ENCODE measurements at regions of chr17 and their contacts with region 1.

Region 1: GRCh38 chr17:78745407-78746088 is 36.5 kb downstream of the CYTH1 start:
- DNase-seq: peak in 9 of 14 experiments; percentile 37 to 83 (median 48)
- ATAC-seq: no peak
- H3K4me3 ChIP-seq: no peak overlapping the region
- H3K4me3 Mint-ChIP-seq: peak overlapping the region; percentile 78
- H3K27ac ChIP-seq: peak overlapping the region; percentile 81 to 84
- H3K27ac Mint-ChIP-seq: peak overlapping the region; percentile 85
- H3K4me1 ChIP-seq: peaks cover 89% of the 10 kb centered on the region
- H3K4me1 Mint-ChIP-seq: peaks cover 94% of the 10 kb centered on the region
- H3K27me3 ChIP-seq: no peaks in the 10 kb centered on the region
- H3K27me3 Mint-ChIP-seq: no peaks in the 10 kb centered on the region
- CTCF ChIP-seq: peak; percentile 86

Region 2: GRCh38 chr17:78598013-78598471 is 147.5 kb before region 1 on chr17:
- CTCF ChIA-PET with region 1: no interaction called
- POLR2A ChIA-PET with region 1: no interaction called
- intact Hi-C with region 1: no loop called
- DNase-seq: no peak
- ATAC-seq: no peak
- H3K4me3 ChIP-seq: no peak overlapping the region
- H3K4me3 Mint-ChIP-seq: no peak overlapping the region
- H3K27ac ChIP-seq: no peak overlapping the region
- H3K27ac Mint-ChIP-seq: no peak overlapping the region
- H3K4me1 ChIP-seq: no peaks in the 10 kb centered on the region
- H3K4me1 Mint-ChIP-seq: no peaks in the 10 kb centered on the region
- H3K27me3 ChIP-seq: no peaks in the 10 kb centered on the region
- H3K27me3 Mint-ChIP-seq: peaks cover 19% of the 10 kb centered on the region
- CTCF ChIP-seq: no peak

Region 3: DNA sequence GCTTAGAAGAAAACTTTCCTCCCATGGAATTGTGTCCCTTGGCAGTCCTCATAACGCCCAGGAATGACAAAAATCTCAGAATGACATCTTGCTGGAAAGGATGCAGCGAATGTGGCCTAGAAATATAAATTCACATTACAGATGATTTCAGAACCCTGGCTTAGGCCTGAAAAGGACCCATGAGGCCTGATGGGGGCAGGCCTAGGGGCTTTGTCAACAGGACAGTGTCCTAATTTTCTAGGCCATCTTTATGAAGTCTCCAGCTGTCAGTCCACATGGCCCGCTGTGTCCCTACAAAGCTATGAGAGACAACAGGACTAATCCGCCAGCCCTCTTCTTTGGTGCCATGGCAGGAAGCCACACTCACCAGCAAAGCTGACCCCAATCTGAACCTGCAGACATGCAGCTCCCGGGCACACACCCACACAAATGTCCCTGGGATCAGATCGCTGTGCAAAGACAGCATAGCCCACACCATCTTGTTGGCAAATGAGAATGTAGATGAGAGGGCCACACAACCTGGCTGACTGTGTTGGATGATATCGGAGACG is 128.0 kb before region 1 on chr17:
- CTCF ChIA-PET with region 1: no interaction called
- POLR2A ChIA-PET with region 1: no interaction called
- intact Hi-C with region 1: no loop called
- DNase-seq: no peak
- ATAC-seq: no peak
- H3K4me3 ChIP-seq: no peak overlapping the region
- H3K4me3 Mint-ChIP-seq: no peak overlapping the region
- H3K27ac ChIP-seq: no peak overlapping the region
- H3K27ac Mint-ChIP-seq: no peak overlapping the region
- H3K4me1 ChIP-seq: no peaks in the 10 kb centered on the region
- H3K4me1 Mint-ChIP-seq: no peaks in the 10 kb centered on the region
- H3K27me3 ChIP-seq: no peaks in the 10 kb centered on the region
- H3K27me3 Mint-ChIP-seq: no peaks in the 10 kb centered on the region
- CTCF ChIP-seq: no peak

Region 4: GRCh38 chr17:78759203-78759968 is 13.8 kb after region 1 on chr17:
- CTCF ChIA-PET with region 1: interaction called, 3 read pairs
- POLR2A ChIA-PET with region 1: interaction called, 92 read pairs
- intact Hi-C with region 1: loop called in 1 of 2 experiments (anchors 1 kb)
- DNase-seq: peak; percentile 72 to 94 (median 82)
- ATAC-seq: peak; percentile 80
- H3K4me3 ChIP-seq: peak overlapping the region; percentile 32
- H3K4me3 Mint-ChIP-seq: peak overlapping the region; percentile 73
- H3K27ac ChIP-seq: peak overlapping the region; percentile 94 to 95
- H3K27ac Mint-ChIP-seq: peak overlapping the region; percentile 87
- H3K4me1 ChIP-seq: peaks cover 92% of the 10 kb centered on the region
- H3K4me1 Mint-ChIP-seq: peaks cover 85% of the 10 kb centered on the region
- H3K27me3 ChIP-seq: no peaks in the 10 kb centered on the region
- H3K27me3 Mint-ChIP-seq: no peaks in the 10 kb centered on the region
- CTCF ChIP-seq: no peak

Region 5: DNA sequence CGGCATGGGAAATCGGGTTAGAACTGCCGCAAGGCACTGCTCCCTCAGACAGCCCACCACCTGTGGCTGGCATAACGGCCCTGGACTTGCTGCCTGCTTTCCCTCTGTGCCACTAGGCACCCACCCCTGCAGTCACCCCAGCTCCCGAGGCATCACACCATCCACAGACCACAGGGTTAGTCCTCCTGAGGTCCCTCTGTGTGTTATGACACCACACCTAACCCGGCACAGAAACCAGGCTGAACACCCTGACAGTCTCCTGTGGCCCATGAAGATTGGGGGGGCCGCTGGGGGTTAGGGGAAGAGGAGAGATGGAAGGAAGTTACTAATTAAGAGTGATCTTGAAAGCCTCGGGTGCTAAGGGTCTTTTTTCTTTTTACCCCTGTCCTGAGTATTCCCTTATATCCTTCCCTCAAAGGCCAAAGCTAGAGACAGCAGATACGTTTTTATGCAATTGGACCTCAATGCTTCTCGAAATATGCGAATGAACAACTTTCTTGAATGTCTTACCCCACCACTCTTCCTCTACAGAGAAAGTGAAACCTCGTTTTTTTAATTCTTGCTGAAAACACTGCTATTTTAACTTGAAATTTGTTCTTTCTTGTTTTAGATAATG is 29.5 kb after region 1 on chr17:
- CTCF ChIA-PET with region 1: interaction called, 4 read pairs
- POLR2A ChIA-PET with region 1: interaction called, 92 read pairs
- intact Hi-C with region 1: loop called (anchors 1 to 2 kb)
- DNase-seq: peak; percentile 39 to 84 (median 54)
- ATAC-seq: peak; percentile 37
- H3K4me3 ChIP-seq: peak overlapping the region; percentile 66
- H3K4me3 Mint-ChIP-seq: peak overlapping the region; percentile 90
- H3K27ac ChIP-seq: peak overlapping the region; percentile 85 to 86
- H3K27ac Mint-ChIP-seq: peak overlapping the region; percentile 95
- H3K4me1 ChIP-seq: peaks cover 89% of the 10 kb centered on the region
- H3K4me1 Mint-ChIP-seq: peaks cover 67% of the 10 kb centered on the region
- H3K27me3 ChIP-seq: no peaks in the 10 kb centered on the region
- H3K27me3 Mint-ChIP-seq: no peaks in the 10 kb centered on the region
- CTCF ChIP-seq: no peak

Region 6: DNA sequence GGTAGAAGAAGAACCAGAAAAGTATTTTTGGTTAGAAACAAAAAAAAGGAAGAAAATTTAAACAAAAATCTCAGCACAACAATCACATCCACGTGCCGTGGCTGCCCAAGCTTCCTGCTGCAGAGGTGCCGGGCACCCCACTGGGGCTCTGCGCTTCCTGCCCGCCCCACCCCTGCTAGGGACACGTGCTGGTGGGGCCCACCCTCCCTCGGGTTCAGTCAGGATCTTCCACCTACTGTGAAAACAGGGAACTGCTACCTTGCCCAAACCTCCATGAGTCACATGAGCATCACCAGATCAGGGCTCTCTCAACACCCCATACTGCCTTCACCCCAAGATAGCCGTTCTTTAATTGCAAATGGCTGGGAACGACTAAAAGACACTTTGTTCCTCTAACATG is 60.9 kb after region 1 on chr17:
- CTCF ChIA-PET with region 1: interaction called, 3 read pairs
- POLR2A ChIA-PET with region 1: interaction called, 13 read pairs
- intact Hi-C with region 1: no loop called
- DNase-seq: peak in 9 of 14 experiments; percentile 27 to 87 (median 66)
- ATAC-seq: peak; percentile 71
- H3K4me3 ChIP-seq: no peak overlapping the region
- H3K4me3 Mint-ChIP-seq: peak overlapping the region; percentile 84
- H3K27ac ChIP-seq: peak overlapping the region in 1 of 2 donors; percentile 64
- H3K27ac Mint-ChIP-seq: peak overlapping the region; percentile 95
- H3K4me1 ChIP-seq: peaks cover 52% of the 10 kb centered on the region
- H3K4me1 Mint-ChIP-seq: peaks cover 63% of the 10 kb centered on the region
- H3K27me3 ChIP-seq: no peaks in the 10 kb centered on the region
- H3K27me3 Mint-ChIP-seq: no peaks in the 10 kb centered on the region
- CTCF ChIP-seq: peak; percentile 47

Region 7: DNA sequence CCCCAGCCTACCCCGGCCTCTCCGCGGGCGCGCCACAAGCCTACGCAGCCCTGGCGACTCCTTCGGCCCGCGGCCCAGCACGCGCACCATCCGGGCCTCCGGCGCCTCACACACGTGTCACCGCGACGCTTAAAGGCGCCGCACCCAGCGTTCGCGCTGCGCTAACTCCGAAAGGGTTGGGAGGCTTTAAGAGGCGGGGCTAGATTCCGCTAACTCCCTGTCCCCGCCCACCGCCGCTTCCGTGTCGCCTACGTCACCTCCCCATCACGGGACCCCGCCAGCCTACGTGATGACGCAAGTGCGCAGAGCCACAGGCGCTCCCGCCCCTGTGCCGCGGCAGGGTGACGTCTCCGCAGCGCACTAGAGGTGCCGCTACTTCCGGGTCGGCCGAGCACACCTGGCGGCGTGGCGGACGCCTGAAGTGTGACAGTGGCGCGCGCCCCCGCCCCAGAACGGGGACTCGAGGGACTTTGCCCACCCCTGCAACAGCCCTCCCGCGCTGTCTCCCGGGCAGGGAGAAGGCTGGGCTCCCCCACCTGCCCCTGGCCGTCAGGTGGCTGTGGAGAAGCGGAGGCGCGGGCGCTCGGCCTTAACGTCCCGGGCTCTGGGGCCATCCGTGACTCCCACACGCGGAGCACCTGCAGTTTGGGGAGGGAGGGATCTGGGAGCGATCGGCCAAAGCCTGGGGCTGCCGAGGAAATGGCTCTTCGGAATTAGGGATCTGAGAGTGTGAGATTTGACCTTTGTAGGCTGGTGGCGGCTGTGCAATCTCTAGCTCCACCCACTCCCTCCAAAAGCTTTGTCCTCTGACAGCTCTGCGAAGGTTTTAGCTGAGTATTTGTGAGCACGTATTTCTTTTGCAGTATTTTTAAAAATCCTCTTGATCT is 95.4 kb after region 1 on chr17 and contains the start of gene USP36:
- CTCF ChIA-PET with region 1: interaction called, 3 read pairs
- POLR2A ChIA-PET with region 1: interaction called, 3 read pairs
- intact Hi-C with region 1: loop called in 1 of 2 experiments (anchors 1 kb)
- DNase-seq: peak; percentile 99 to 100 (median 100)
- ATAC-seq: peak; percentile 80
- H3K4me3 ChIP-seq: peak within 1 kb of the TSS; percentile 91
- H3K4me3 Mint-ChIP-seq: peak within 1 kb of the TSS; percentile 99
- H3K27ac ChIP-seq: peak within 1 kb of the TSS; percentile 96 to 99
- H3K27ac Mint-ChIP-seq: peak within 1 kb of the TSS; percentile 93
- H3K4me1 ChIP-seq: peaks cover 52% of the 10 kb centered on the region
- H3K4me1 Mint-ChIP-seq: peaks cover 56% of the 10 kb centered on the region
- H3K27me3 ChIP-seq: no peaks in the 10 kb centered on the region
- H3K27me3 Mint-ChIP-seq: no peaks in the 10 kb centered on the region
- CTCF ChIP-seq: peak; percentile 44
- total RNA-seq, gene USP36: 489 to 494 TPM

Measured in CD4-positive, alpha-beta T cell (primary cell).